Activated B cell treated with CpG ODN at 0.5 μM for 24 hours (primary cell): ENCODE measurements at regions of chr20 and their contacts with region 1.

Region 1: GRCh38 chr20:44885392-44886265 is at the start of gene YWHAB:
- DNase-seq: peak; percentile 96
- ATAC-seq: peak; percentile 98
- H3K4me3 Mint-ChIP-seq: peak within 1 kb of the TSS; percentile 94
- H3K27ac Mint-ChIP-seq: peak within 1 kb of the TSS; percentile 91
- H3K4me1 Mint-ChIP-seq: peaks cover 60% of the 10 kb centered on the region
- H3K27me3 Mint-ChIP-seq: no peaks in the 10 kb centered on the region
- CTCF ChIP-seq: no peak
- total RNA-seq, gene YWHAB: 234 and 246 TPM in 2 replicates

Region 2: DNA sequence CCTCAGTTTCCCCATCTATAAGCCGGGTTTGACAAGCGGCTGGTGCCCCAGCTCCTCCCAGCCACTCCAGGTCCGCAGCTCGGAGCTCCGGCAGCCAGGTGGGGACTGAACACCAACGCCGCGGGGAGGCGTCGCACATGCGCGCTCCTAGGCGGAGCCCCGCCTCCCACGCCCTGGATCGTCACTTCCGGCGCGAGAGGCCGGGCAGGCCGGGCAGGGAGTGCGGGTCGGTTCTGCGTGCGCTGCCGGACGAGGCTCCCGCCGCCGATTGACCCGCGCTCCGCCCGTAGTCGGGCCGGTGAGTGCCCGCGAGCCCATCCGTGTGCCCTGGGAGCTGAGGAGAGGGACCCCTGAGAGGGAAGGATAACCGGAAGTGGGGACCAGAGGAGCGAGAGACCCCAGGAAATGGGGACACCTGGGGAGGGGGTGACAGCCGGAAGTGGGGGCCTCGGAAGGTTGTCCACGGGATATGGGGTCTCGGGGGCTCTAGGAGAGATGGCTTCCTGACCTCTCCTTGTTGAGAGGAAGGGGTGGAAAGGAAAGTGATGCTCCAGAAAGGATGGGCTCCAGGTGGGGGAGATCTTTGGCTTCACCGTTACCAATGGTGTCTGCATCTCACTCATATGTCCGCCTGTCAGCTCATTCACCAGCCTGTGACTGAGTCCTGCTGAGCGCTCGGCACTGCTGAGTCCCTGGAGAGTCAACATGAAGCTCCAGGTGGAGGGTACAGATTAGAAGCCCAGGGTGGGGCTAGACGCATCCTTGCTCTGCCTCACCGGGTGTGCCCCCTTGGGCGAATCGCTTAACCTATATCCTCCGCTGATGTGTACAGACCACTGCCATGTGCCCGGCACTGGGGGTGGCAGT is 409.7 kb before region 1 on chr20 and contains the start of gene TTPAL:
- CTCF ChIA-PET with region 1: no interaction called
- POLR2A ChIA-PET with region 1: interaction called, 4 read pairs
- intact Hi-C with region 1: loop called (anchors 5 kb)
- DNase-seq: peak; percentile 93
- ATAC-seq: peak; percentile 91
- H3K4me3 Mint-ChIP-seq: peak within 1 kb of the TSS; percentile 96
- H3K27ac Mint-ChIP-seq: peak within 1 kb of the TSS; percentile 94
- H3K4me1 Mint-ChIP-seq: peaks cover 40% of the 10 kb centered on the region
- H3K27me3 Mint-ChIP-seq: no peaks in the 10 kb centered on the region
- CTCF ChIP-seq: no peak
- total RNA-seq, gene TTPAL: 27.5 and 27.7 TPM in 2 replicates

Region 3: DNA sequence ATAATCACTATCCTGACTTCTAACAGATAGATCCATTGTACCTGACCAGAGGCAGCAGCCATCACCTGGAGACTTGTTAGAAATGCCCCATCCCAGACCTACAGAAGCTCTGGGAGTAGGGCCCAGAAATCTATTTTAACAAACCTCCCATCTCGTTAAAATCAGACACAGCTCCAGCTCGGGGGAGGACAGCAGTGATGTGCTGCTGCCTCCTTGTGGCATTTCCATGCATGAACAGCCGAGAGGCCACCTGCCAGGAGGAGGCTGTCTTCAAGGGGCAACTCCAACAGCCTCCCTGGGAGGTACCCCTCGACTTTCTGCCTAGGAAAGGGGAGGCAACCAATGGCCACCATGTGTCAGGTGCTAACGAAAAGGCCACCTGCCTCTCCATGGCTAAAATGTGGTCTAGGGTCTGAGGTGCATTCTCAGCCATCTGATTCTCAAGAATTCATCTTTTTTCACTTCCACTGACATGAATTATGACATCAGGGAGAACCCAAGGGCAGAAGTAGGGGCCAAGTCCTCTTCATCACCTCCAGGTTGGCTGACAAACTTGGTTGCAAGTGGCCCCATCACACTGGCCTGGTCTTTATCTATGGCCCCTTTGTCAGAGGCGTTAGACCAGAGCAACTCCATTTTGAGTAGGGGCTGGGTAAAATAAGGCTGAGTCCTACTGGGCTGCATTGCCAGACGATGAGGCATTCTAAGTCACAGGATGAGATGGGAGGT is 152.1 kb before region 1 on chr20:
- CTCF ChIA-PET with region 1: no interaction called
- POLR2A ChIA-PET with region 1: interaction called, 10 read pairs
- intact Hi-C with region 1: no loop called
- DNase-seq: peak; percentile 27
- ATAC-seq: peak; percentile 74
- H3K4me3 Mint-ChIP-seq: no peak overlapping the region
- H3K27ac Mint-ChIP-seq: no peak overlapping the region
- H3K4me1 Mint-ChIP-seq: peaks cover 8% of the 10 kb centered on the region
- H3K27me3 Mint-ChIP-seq: no peaks in the 10 kb centered on the region
- CTCF ChIP-seq: no peak

Region 4: DNA sequence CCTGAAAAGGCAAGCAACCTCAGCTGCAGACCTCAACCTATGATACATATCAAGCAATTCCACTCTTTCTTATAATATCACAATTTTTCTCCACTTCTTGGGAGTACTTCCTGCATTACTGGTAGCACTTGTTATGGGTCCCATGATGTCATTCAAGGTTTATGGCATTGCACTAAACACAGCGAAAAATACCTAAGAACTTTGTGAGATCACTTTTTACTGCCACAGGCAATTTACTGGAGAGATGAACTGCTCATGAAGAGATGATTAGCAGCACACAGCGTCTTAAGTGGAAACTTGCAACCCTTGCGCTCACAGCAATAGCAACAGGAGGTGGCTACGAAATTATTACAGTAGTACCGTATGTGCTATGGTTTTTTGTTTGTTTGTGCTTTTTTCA is 55.9 kb before region 1 on chr20:
- CTCF ChIA-PET with region 1: no interaction called
- POLR2A ChIA-PET with region 1: no interaction called
- intact Hi-C with region 1: no loop called
- DNase-seq: no peak
- ATAC-seq: no peak
- H3K4me3 Mint-ChIP-seq: no peak overlapping the region
- H3K27ac Mint-ChIP-seq: no peak overlapping the region
- H3K4me1 Mint-ChIP-seq: no peaks in the 10 kb centered on the region
- H3K27me3 Mint-ChIP-seq: peaks cover 36% of the 10 kb centered on the region
- CTCF ChIP-seq: no peak

Region 5: DNA sequence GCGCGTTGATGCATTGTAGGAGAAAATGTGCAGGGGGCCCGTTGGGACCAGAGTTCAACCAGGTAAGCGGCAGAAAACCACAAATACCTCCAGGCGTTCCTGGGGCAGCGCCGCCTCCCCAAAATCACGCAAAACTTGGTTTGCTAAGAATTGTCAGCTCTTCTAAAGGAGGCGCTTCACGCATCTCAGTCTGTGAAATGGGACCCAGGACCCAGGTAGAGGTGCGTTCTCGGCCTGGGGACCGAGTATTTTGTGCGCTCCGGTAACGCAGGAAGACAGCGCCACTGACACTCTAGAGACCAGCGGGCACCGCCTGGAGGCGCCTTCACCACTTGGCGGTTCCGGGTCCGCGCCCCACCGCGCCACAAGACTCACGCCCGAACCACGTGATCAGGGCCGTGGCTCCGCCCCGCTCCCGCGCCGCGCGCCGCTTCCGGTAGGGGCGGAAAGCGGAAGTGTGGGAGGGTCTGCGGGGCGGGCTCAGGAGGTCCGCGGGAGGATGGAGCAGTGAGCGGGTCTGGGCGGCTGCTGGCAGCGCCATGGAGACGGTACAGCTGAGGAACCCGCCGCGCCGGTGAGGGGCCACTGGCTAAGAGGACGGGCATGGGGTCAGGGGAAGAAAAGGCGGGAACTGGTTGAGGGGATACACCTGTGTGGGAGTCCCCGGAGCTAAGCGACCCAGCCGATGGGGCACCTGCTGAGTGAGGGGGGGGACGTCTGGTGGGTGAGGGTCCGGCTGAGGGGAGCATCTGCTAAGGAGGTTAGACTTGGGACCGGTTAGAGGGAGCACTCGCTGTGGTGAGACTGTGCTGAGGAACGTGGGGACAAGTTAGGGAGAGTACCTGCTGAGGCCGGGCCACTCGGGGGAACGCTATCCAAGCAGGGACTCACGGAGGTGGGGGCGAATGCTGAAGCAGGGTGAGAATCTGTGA is 80.7 kb after region 1 on chr20 and contains the start of gene STK4:
- CTCF ChIA-PET with region 1: no interaction called
- POLR2A ChIA-PET with region 1: interaction called, 6 read pairs
- intact Hi-C with region 1: loop called (anchors 1 kb)
- DNase-seq: peak; percentile 98
- ATAC-seq: peak; percentile 78
- H3K4me3 Mint-ChIP-seq: peak within 1 kb of the TSS; percentile 99
- H3K27ac Mint-ChIP-seq: peak within 1 kb of the TSS; percentile 97
- H3K4me1 Mint-ChIP-seq: peaks cover 67% of the 10 kb centered on the region
- H3K27me3 Mint-ChIP-seq: no peaks in the 10 kb centered on the region
- CTCF ChIP-seq: no peak
- total RNA-seq, gene STK4: 219 and 245 TPM in 2 replicates

Region 6: DNA sequence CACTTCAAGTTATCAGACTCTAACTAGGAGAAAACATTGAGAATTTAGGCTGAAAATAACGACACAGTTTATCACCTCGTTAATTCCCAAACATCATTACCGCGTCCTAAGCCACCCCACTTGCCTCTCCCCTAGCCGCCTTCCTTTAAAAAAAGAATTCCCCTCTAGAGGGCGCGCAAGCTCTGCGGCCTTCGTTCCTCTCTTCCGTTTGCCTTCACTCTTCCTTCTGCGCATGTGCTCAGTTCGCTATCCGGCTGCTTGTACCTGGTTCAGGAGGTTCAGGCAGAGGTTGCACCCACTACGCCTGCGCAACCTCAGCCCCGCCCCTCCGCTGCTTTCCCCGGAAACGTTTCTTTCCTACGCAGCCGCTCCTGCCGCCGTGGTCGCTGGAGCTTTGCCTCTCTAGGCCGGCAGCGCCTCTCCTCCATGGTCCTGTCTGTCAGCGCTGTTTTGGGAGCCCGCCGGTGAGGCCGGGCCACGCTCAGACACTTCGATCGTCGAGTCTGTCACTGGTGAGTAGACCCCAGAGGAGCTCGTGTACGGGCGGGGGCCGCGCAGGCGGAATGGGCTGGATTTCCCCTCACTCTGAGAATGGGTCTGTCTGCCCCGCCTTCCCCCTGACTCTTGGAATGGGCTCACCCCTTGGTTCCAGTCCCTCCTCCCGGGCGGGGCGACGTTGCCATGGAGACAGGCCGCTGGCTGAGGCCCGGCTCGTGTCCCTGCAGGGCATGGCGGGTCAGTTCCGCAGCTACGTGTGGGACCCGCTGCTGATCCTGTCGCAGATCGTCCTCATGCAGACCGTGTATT is 477.4 kb after region 1 on chr20 and contains the start of gene SYS1:
- CTCF ChIA-PET with region 1: no interaction called
- POLR2A ChIA-PET with region 1: no interaction called
- intact Hi-C with region 1: loop called (anchors 1 kb)
- DNase-seq: peak; percentile 94
- ATAC-seq: peak; percentile 84
- H3K4me3 Mint-ChIP-seq: peak within 1 kb of the TSS; percentile 100
- H3K27ac Mint-ChIP-seq: peak within 1 kb of the TSS; percentile 99
- H3K4me1 Mint-ChIP-seq: peaks cover 53% of the 10 kb centered on the region
- H3K27me3 Mint-ChIP-seq: no peaks in the 10 kb centered on the region
- CTCF ChIP-seq: peak; percentile 69
- total RNA-seq, gene SYS1: 31.7 and 35.2 TPM in 2 replicates